Activated CD8-positive, alpha-beta T cell treated with anti-CD3 and anti-CD28 coated beads, Interleukin-2, amount 10 ng/mL, durations not matched to agents 7 days and 5 days (primary cell): ENCODE measurements at regions of chr3 and their contacts with region 1.

Region 1: GRCh38 chr3:187319699-187320302 is 28.3 kb upstream of the MASP1 start:
- DNase-seq: peak; percentile 74
- ATAC-seq: peak; percentile 81
- H3K4me3 Mint-ChIP-seq: no peak overlapping the region
- H3K27ac Mint-ChIP-seq: no peak overlapping the region
- H3K4me1 Mint-ChIP-seq: peaks cover 11% of the 10 kb centered on the region
- H3K27me3 Mint-ChIP-seq: peaks cover 25% of the 10 kb centered on the region

Region 2: GRCh38 chr3:187305881-187306280 is 13.9 kb before region 1 on chr3:
- CTCF ChIA-PET with region 1: interaction called, 21 read pairs
- POLR2A ChIA-PET with region 1: no interaction called
- DNase-seq: no peak
- ATAC-seq: no peak
- H3K4me3 Mint-ChIP-seq: no peak overlapping the region
- H3K27ac Mint-ChIP-seq: no peak overlapping the region
- H3K4me1 Mint-ChIP-seq: no peaks in the 10 kb centered on the region
- H3K27me3 Mint-ChIP-seq: peaks cover 34% of the 10 kb centered on the region

Region 3: DNA sequence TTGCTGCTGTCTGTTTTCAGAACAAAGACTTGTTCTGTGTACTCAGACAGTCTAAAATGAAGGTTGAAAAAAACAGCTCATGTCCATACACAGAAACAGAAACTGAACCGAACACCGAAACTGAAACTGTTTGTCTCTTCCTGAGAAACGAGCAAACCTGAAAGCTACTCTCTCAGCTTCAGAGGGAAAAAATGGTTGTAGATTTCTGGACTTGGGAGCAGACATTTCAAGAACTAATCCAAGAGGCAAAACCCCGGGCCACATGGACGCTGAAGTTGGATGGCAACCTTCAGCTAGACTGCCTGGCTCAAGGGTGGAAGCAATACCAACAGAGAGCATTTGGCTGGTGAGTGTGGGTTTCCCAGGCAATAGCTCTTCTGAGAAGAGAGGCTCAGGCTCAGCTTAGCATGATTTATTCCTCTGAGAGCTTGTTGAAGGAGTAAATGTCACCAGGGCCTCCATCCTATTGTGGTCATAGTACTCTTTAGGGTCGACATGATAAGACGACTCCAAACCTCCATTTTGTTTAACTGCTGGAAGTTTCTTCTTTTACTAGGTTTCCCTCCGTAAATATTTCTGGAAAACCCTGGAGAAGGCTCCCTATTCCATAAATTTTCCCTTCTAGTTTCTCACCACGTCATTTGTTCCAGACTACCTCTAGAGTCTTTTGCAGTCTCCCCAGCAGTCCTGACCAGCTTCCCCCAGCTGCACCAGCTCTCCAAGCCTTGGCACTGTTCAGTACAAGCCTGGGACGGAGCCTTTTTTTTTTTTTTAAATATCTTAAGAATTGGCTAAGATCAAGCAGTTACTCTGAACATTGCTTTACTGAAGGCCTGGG is 48.7 kb after region 1 on chr3 and contains the start of gene RTP4:
- CTCF ChIA-PET with region 1: interaction called, 45 read pairs
- POLR2A ChIA-PET with region 1: interaction called, 3 read pairs
- DNase-seq: peak; percentile 72
- ATAC-seq: peak; percentile 92
- H3K4me3 Mint-ChIP-seq: peak within 1 kb of the TSS; percentile 82
- H3K27ac Mint-ChIP-seq: peak within 1 kb of the TSS; percentile 93
- H3K4me1 Mint-ChIP-seq: peaks cover 23% of the 10 kb centered on the region
- H3K27me3 Mint-ChIP-seq: no peaks in the 10 kb centered on the region
- total RNA-seq, gene RTP4: 12.9 to 14.8 TPM

Region 4: DNA sequence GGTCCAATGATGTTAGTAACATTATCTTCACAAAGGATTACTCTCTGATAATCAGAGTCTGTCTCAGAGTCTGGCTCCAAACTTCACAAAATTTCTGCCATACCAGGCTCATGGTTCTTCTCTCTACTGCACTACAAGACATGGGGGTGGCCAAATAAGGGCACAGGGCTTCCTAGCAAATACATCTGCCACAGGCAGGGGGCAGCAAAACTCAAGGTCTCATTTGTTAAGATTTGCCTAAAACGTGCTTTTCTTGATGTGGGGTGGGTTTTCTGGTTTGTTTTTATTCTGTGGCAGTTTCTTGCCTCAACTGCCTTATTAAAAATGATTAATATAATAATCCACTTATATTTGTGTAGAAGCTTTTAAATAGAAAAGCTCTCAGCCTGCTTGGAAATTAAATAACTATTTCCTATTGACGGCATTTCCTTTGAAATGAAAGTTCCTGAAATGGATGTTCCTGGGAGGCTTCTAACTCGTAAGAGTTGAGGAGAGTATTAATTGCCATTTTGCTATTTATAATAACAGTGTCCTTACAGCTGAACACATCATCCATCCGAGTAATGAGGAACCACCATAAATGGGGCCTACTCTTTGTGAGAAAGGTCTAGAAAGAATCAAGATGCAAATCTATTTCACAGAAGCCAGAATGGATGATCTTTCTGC is 296.6 kb after region 1 on chr3:
- CTCF ChIA-PET with region 1: interaction called, 62 read pairs
- POLR2A ChIA-PET with region 1: no interaction called
- DNase-seq: peak; percentile 74
- ATAC-seq: peak; percentile 74
- H3K4me3 Mint-ChIP-seq: no peak overlapping the region
- H3K27ac Mint-ChIP-seq: no peak overlapping the region
- H3K4me1 Mint-ChIP-seq: peaks cover 7% of the 10 kb centered on the region
- H3K27me3 Mint-ChIP-seq: peaks cover 19% of the 10 kb centered on the region

Region 5: DNA sequence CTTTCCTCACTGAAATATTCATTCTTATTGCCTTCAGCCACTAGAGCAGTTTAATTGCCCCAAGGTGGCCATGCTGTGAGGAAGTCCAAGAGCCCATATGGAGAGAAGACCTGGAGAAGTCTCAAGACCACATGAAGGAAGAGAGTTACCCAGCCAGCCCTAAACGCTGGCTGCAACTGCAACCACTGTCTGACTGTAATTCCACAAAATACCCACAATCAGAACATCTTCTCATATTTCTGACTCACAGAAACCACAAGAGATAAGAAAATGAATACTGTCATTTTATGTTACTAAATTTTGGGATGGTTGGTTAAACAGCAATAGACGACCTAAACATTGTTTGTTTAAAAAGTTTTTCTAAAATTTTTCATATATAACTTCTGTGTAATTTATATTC is 365.1 kb after region 1 on chr3:
- CTCF ChIA-PET with region 1: interaction called, 397 read pairs
- POLR2A ChIA-PET with region 1: interaction called, 4 read pairs
- DNase-seq: no peak
- ATAC-seq: peak; percentile 49
- H3K4me3 Mint-ChIP-seq: no peak overlapping the region
- H3K27ac Mint-ChIP-seq: no peak overlapping the region
- H3K4me1 Mint-ChIP-seq: peaks cover 3% of the 10 kb centered on the region
- H3K27me3 Mint-ChIP-seq: peaks cover 20% of the 10 kb centered on the region